Ovary (tissue), 10 donors: ENCODE measurements at regions of chr1 and their contacts with region 1.

Region 1: GRCh38 chr1:177413982-177414596 is 243.3 kb downstream of the BRINP2 start:
- DNase-seq: no peak
- H3K4me3 ChIP-seq: no peak overlapping the region
- H3K27ac ChIP-seq: no peak overlapping the region
- H3K4me1 ChIP-seq: no peaks in the 10 kb centered on the region
- H3K27me3 ChIP-seq: no peaks in the 10 kb centered on the region
- CTCF ChIP-seq: no peak
- EP300 ChIP-seq: no peak
- POLR2A ChIP-seq: no peak

Region 2: GRCh38 chr1:179046808-179047635 is 1632.9 kb after region 1 on chr1:
- intact Hi-C with region 1: loop called in 1 of 4 experiments (anchors 5 kb)
- DNase-seq: no peak
- H3K4me3 ChIP-seq: no peak overlapping the region
- H3K27ac ChIP-seq: no peak overlapping the region
- H3K4me1 ChIP-seq: no peaks in the 10 kb centered on the region
- H3K27me3 ChIP-seq: no peaks in the 10 kb centered on the region
- CTCF ChIP-seq: no peak
- EP300 ChIP-seq: no peak
- POLR2A ChIP-seq: no peak